A673 (cell line): ENCODE measurements at regions of chr9 and their contacts with region 1.

Region 1: GRCh38 chr9:34179213-34180136 is 632 bp downstream of the UBAP1 start:
- DNase-seq: peak; percentile 59
- H3K4me3 ChIP-seq: peak overlapping the region; percentile 78
- H3K27ac ChIP-seq: peak overlapping the region; percentile 93
- H3K4me1 ChIP-seq: peaks cover 4% of the 10 kb centered on the region
- H3K27me3 ChIP-seq: no peaks in the 10 kb centered on the region
- CTCF ChIP-seq: no peak

Region 2: GRCh38 chr9:34126207-34127034 is 53.1 kb before region 1 on chr9 and contains the start of gene DCAF12:
- CTCF ChIA-PET with region 1: no interaction called
- POLR2A ChIA-PET with region 1: no interaction called
- intact Hi-C with region 1: no loop called
- DNase-seq: peak; percentile 96
- H3K4me3 ChIP-seq: peak within 1 kb of the TSS; percentile 87
- H3K27ac ChIP-seq: peak within 1 kb of the TSS; percentile 88
- H3K4me1 ChIP-seq: peaks cover 12% of the 10 kb centered on the region
- H3K27me3 ChIP-seq: no peaks in the 10 kb centered on the region
- CTCF ChIP-seq: no peak
- total RNA-seq, gene DCAF12: 37.9 and 39.6 TPM in 2 replicates

Region 3: DNA sequence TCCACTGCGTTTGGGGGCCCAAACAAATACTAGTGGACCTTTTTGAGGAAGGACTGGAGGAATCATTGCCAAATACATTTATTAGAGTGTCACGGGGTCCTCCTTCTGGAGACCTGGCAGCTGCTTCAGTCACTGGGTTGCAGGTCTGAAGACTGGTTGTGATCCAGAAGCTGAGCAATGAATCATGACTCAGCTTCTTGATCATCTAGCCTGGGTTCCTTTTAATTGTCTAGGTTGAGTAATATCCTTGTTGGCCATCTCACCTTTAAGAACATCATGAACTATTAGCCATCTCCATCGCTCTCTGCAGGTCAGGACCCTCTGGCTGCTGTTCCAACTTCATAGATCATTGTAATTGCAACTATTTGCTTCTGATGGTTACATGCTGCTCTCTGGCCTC is 16.0 kb before region 1 on chr9:
- CTCF ChIA-PET with region 1: no interaction called
- POLR2A ChIA-PET with region 1: interaction called, 15 read pairs
- intact Hi-C with region 1: no loop called
- DNase-seq: no peak
- H3K4me3 ChIP-seq: no peak overlapping the region
- H3K27ac ChIP-seq: no peak overlapping the region
- H3K4me1 ChIP-seq: no peaks in the 10 kb centered on the region
- H3K27me3 ChIP-seq: no peaks in the 10 kb centered on the region
- CTCF ChIP-seq: no peak